Calu3 (cell line): ENCODE measurements at regions of chr19 and their contacts with region 1.

Region 1: GRCh38 chr19:40529093-40529954 is 47.3 kb upstream of the SHKBP1 start:
- DNase-seq: peak; percentile 93
- H3K4me3 Mint-ChIP-seq: peak overlapping the region; percentile 57
- H3K27ac Mint-ChIP-seq: no peak overlapping the region
- H3K4me1 Mint-ChIP-seq: peaks cover 17% of the 10 kb centered on the region
- H3K27me3 Mint-ChIP-seq: peaks cover 78% of the 10 kb centered on the region
- CTCF ChIP-seq: peak; percentile 96

Region 2: DNA sequence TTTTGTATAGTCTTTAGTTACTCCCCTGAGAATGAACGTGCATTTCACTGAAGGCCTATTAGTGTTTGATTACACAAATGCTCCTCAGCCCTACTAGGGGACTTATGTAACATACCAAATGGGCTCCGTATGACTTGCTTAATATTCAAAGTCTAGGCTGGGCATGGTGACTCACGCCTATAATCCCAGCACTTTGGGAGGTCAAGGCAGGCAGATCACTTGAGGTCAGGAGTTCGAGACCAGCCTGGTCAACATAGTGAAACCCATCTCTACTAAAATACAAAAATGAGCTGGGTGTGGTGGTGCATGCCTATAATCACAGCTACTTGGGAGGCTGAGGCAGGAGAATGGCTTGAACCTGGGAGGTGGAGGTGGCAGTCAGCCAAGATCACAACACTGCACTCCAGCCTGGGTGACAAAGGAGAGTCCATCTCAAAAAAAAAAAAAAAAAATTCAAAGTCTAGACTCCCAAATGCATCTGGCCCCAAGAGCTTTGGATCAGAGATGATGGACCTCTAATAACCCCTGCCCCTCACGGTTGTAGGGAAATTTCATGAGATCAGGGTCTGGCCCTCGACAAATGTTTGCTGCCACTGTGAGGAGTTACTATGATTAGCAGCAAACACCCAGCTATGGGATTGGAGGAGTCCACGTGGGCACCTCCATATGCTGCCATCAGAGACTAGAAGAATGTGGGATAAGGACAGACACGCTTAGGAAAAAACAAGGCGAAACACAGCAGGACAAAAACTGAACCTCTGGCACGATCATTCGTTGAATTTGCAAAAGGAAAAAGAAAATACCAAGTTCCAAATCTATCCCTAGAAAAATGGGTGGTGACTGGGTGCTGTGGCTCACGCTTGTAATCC is 1558.4 kb before region 1 on chr19:
- CTCF ChIA-PET with region 1: no interaction called
- intact Hi-C with region 1: no loop called
- DNase-seq: no peak
- H3K4me3 Mint-ChIP-seq: no peak overlapping the region
- H3K27ac Mint-ChIP-seq: no peak overlapping the region
- H3K4me1 Mint-ChIP-seq: peaks cover 14% of the 10 kb centered on the region
- H3K27me3 Mint-ChIP-seq: no peaks in the 10 kb centered on the region
- CTCF ChIP-seq: no peak

Region 3: GRCh38 chr19:40305403-40305802 is 223.9 kb before region 1 on chr19:
- CTCF ChIA-PET with region 1: interaction called, 4 read pairs
- intact Hi-C with region 1: loop called (anchors 10 kb)
- DNase-seq: peak; percentile 83
- H3K4me3 Mint-ChIP-seq: no peak overlapping the region
- H3K27ac Mint-ChIP-seq: no peak overlapping the region
- H3K4me1 Mint-ChIP-seq: no peaks in the 10 kb centered on the region
- H3K27me3 Mint-ChIP-seq: no peaks in the 10 kb centered on the region
- CTCF ChIP-seq: peak; percentile 88

Region 4: DNA sequence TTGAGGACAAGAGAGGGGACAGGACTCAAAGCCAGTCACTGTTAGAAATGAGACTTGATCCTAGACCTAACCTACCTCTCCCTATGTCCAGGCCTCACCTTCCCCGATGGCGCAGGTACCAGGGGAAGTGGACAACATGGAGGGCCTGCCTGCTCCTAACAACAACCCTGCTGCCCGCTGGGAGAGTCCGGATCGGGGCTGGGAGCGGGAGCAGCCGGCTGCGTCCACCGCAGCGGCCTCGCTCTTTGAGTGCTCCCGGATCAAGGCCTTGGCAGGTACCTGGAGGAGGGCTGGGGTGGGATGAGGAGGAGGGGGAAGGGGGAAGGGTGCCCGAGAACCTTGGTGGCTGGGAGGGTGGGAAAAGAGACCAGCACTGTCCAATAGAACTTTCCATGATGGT is 56.8 kb before region 1 on chr19:
- CTCF ChIA-PET with region 1: no interaction called
- intact Hi-C with region 1: no loop called
- DNase-seq: no peak
- H3K4me3 Mint-ChIP-seq: no peak overlapping the region
- H3K27ac Mint-ChIP-seq: no peak overlapping the region
- H3K4me1 Mint-ChIP-seq: no peaks in the 10 kb centered on the region
- H3K27me3 Mint-ChIP-seq: no peaks in the 10 kb centered on the region
- CTCF ChIP-seq: no peak